GM13977 (cell line): ENCODE measurements at regions of chr18 and their contacts with region 1.

Region 1: DNA sequence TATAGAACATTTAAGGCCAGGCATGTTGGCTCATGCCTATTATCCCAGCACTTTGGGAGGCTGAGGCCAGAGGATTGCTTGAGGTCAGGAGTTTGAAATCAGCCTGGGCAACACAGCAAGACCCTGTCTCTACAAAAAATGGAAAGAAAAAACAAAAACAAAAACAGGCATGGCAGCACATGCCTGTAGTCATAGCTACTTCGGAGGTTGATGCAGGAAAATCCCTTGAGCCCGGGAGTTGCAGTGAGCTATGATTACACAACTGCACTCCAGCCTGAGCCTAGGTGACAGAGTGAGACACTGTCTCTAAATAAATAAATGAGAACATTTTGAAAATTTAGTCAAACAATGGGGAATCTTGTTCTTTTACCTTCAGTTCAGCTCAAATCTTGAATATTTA is 12.1 kb upstream of the YES1 start:
- DNase-seq: no peak
- CTCF ChIP-seq: no peak

Region 2: DNA sequence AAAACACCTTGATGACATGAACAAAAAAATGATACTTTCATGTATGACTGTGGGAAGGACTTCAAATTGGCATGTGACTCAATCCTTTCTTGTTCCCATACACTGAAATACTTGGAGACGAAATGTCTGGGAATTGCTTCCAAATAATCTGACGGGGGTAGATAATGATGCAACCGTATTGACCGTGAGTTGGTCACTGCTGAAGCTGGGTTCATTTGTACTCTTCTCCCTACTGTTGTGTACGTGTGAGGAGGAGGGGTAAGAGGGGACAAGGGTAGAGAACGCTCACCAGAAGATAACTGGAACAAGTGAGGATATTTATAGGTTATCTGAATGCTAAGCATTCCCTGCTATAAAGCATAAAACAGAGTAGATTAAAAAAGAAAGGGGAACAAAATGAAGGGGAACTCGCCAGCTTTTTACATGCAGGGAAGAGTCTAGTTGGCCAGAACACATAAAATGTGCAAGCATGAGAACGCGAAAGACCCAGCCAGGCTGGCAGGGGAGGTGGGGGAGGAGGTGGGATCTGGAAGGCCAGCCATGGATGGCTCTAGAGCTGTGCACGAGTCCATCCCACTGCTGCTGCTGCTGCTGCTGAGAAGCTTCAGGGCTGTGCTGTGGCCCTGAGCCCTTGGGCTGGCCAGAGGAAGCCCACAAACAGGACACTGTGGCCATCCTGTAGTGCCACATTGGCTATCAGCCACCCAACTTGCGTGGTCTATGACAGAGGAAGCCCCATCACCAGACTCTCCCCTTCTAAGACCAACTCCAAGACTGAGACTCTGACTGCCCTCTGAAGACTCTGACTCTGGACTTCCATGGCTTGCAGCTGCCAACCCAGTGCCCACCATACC is 259.2 kb before region 1 on chr18:
- in situ Hi-C with region 1: no loop called
- DNase-seq: no peak
- CTCF ChIP-seq: no peak

Region 3: DNA sequence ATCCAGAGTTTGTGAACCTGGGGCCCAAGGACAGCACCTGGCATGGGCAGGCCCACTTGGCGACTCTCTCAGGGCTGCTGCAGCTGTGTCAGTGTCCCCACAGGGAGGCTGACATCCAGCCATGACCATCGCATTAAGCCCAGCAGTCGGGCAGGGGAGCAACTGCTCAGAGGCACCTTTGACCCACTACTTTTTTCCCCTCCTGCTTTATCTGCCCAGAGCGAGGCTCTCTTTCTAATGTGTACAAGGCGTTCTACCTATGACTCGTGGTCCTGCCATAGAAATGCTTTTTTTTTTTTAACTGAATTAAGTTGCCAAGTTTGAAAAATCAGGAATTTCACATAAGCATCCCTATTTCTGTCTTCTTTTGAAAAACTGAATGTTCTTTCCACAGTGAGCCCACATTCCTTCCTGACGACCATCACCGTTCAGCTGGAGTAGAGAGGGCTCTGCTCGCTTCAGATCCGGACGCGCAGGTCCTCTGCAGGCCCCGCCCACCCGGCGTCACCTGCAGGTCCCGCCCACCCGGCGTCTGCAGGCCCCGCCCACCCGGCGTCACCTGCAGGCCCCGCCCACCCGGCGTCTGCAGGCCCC is 227.8 kb before region 1 on chr18:
- in situ Hi-C with region 1: no loop called
- DNase-seq: peak; percentile 62
- CTCF ChIP-seq: no peak

Region 4: GRCh38 chr18:741931-742512 is 82.2 kb before region 1 on chr18:
- in situ Hi-C with region 1: loop called (anchors 10 kb)
- DNase-seq: peak; percentile 66
- CTCF ChIP-seq: peak; percentile 63